CD8-positive, alpha-beta memory T cell (primary cell): ENCODE measurements at regions of chr11 and their contacts with region 1.

Region 1: GRCh38 chr11:123301696-123302400 is 106.8 kb upstream of the CLMP start:
- DNase-seq: peak; percentile 48 to 69 (median 52)
- H3K4me3 ChIP-seq: peak overlapping the region; percentile 55
- H3K4me3 Mint-ChIP-seq: peak overlapping the region; percentile 65 to 80 (median 74)
- H3K27ac ChIP-seq: no peak overlapping the region
- H3K27ac Mint-ChIP-seq: peak overlapping the region; percentile 27 to 90 (median 76)
- H3K4me1 ChIP-seq: peaks cover 24% of the 10 kb centered on the region
- H3K4me1 Mint-ChIP-seq: peaks cover 29 to 43% (median 41%) of the 10 kb centered on the region in 3 donors
- H3K27me3 ChIP-seq: no peaks in the 10 kb centered on the region
- H3K27me3 Mint-ChIP-seq: no peaks in the 10 kb centered on the region

Region 2: DNA sequence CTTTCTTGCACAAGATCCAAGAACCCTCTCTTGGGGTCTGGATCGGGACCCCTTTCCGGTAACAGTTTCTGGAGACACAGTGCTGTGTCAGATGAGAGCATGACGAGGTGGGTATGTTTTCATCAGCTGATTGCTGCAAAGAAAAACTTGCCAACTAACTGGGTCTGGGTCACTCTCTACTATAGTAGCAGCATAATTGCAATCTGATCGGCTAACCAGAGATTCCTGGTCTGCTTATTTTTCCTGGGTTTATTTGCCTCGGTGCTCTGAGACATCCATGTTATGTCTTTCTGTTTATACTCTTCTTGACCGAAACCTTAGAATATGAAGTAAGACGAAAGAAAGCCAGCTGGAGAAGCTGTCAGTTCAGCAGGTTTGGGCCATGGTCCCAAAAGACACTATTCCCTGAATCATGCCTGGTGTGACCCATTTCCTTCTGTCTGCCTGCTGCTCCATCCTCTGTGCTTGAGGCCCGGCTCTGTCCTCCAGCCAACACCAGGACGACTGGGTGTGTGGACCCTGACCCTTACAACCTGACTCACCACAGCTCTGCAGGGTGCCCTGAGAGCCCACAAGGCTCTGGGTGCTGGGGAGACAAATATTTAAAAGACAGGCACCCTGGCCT is 82.7 kb before region 1 on chr11:
- CTCF ChIA-PET with region 1: no interaction called
- POLR2A ChIA-PET with region 1: no interaction called
- DNase-seq: no peak
- H3K4me3 ChIP-seq: no peak overlapping the region
- H3K4me3 Mint-ChIP-seq: no peak overlapping the region
- H3K27ac ChIP-seq: no peak overlapping the region
- H3K27ac Mint-ChIP-seq: no peak overlapping the region
- H3K4me1 ChIP-seq: no peaks in the 10 kb centered on the region
- H3K4me1 Mint-ChIP-seq: no peaks in the 10 kb centered on the region
- H3K27me3 ChIP-seq: no peaks in the 10 kb centered on the region
- H3K27me3 Mint-ChIP-seq: peaks cover 10 to 55% of the 10 kb centered on the region in 2 donors

Region 3: GRCh38 chr11:123255909-123256308 is 45.9 kb before region 1 on chr11:
- CTCF ChIA-PET with region 1: no interaction called
- POLR2A ChIA-PET with region 1: no interaction called
- DNase-seq: no peak
- H3K4me3 ChIP-seq: no peak overlapping the region
- H3K4me3 Mint-ChIP-seq: no peak overlapping the region
- H3K27ac ChIP-seq: no peak overlapping the region
- H3K27ac Mint-ChIP-seq: no peak overlapping the region
- H3K4me1 ChIP-seq: no peaks in the 10 kb centered on the region
- H3K4me1 Mint-ChIP-seq: no peaks in the 10 kb centered on the region
- H3K27me3 ChIP-seq: no peaks in the 10 kb centered on the region
- H3K27me3 Mint-ChIP-seq: peaks cover 18 to 58% of the 10 kb centered on the region in 2 donors

Region 4: GRCh38 chr11:123282597-123282996 is 19.3 kb before region 1 on chr11:
- CTCF ChIA-PET with region 1: no interaction called
- POLR2A ChIA-PET with region 1: no interaction called
- DNase-seq: no peak
- H3K4me3 ChIP-seq: no peak overlapping the region
- H3K4me3 Mint-ChIP-seq: no peak overlapping the region
- H3K27ac ChIP-seq: no peak overlapping the region
- H3K27ac Mint-ChIP-seq: no peak overlapping the region
- H3K4me1 ChIP-seq: no peaks in the 10 kb centered on the region
- H3K4me1 Mint-ChIP-seq: no peaks in the 10 kb centered on the region
- H3K27me3 ChIP-seq: peaks cover 4% of the 10 kb centered on the region
- H3K27me3 Mint-ChIP-seq: peaks cover 19 to 53% of the 10 kb centered on the region in 2 donors

Region 5: GRCh38 chr11:123478352-123478987 is 176.6 kb after region 1 on chr11:
- CTCF ChIA-PET with region 1: interaction called, 10 read pairs
- POLR2A ChIA-PET with region 1: no interaction called
- DNase-seq: peak in 4 of 5 donors; percentile 15 to 49 (median 46)
- H3K4me3 ChIP-seq: no peak overlapping the region
- H3K4me3 Mint-ChIP-seq: peak overlapping the region in 6 of 7 donors; percentile 13 to 72 (median 50)
- H3K27ac ChIP-seq: no peak overlapping the region
- H3K27ac Mint-ChIP-seq: peak overlapping the region in 6 of 8 donors; percentile 33 to 71 (median 62)
- H3K4me1 ChIP-seq: no peaks in the 10 kb centered on the region
- H3K4me1 Mint-ChIP-seq: peaks cover 24 to 45% (median 35%) of the 10 kb centered on the region in 3 donors
- H3K27me3 ChIP-seq: no peaks in the 10 kb centered on the region
- H3K27me3 Mint-ChIP-seq: peaks cover 0 to 3% of the 10 kb centered on the region in 2 donors